HCT116 (cell line): ENCODE measurements at regions of chr1 and their contacts with region 1.

Region 1: DNA sequence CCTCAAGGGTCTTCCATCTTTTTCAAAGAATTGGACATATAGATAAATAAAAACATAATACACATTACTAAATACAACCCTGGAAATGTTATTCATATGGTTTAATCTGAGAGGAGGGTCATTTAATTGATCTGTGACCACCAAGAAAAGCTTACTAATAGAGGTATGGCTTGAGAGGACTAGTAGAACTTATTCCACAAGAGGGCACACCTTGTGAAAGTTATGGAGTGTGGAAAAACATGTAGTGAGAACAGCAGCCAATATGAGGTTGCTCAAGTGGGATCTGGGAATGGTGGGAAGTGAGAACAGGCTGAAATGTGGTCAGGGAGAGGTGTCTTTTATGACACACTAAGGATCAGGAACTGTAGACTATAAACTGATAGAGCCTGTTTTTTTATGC is 973.5 kb upstream of the B3GALT2 start:
- DNase-seq: peak; percentile 8
- ATAC-seq: peak; percentile 67
- H3K4me3 ChIP-seq: no peak overlapping the region
- H3K27ac ChIP-seq: no peak overlapping the region
- H3K4me1 ChIP-seq: no peaks in the 10 kb centered on the region
- H3K27me3 ChIP-seq: no peaks in the 10 kb centered on the region
- CTCF ChIP-seq: peak in 2 of 3 experiments; percentile 12 to 46; a peak in 3 of 6 replicates
- POLR2A ChIP-seq: no peak
- RAD21 ChIP-seq: peak; percentile 35; the same call in 1 of the 2 replicates

Region 2: GRCh38 chr1:194105381-194105780 is 54.6 kb before region 1 on chr1:
- CTCF ChIA-PET with region 1: no interaction called
- POLR2A ChIA-PET with region 1: no interaction called
- RAD21 ChIA-PET with region 1: no interaction called
- intact Hi-C with region 1: loop called (anchors 5 kb)
- DNase-seq: no peak
- ATAC-seq: no peak
- H3K4me3 ChIP-seq: no peak overlapping the region
- H3K27ac ChIP-seq: no peak overlapping the region
- H3K4me1 ChIP-seq: no peaks in the 10 kb centered on the region
- H3K27me3 ChIP-seq: no peaks in the 10 kb centered on the region
- CTCF ChIP-seq: no peak
- POLR2A ChIP-seq: no peak
- RAD21 ChIP-seq: no peak